ENCODE measurements at regions of chr2 and their contacts with region 1.

Region 1: DNA sequence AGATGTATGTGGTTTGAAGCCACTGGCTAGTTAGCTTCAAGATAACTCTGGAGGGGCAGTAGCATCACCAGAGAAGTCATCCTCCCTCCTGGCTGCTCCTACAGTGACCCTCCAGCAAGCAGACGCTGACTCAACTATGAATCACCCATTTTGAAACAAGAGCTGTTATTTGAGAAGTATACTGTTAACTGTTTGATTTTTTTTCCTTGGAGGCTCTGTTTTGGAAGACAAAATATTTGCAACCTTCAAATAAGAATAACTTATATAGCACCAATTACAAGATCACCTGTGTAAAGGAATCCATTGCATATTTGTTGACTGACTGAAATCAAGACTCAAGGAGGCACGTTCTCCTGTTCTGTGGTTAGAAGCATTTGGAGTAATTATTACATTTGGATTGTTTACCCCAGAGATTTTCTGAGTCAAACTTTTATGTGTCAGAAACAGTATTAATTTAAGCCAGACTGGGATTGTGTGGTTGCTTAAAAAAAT is 313.8 kb downstream of the MTX2 start:
- DNase-seq: peak; percentile 97
- ATAC-seq: peak; percentile 90
- H3K4me3 ChIP-seq: peak overlapping the region; percentile 59
- H3K27ac ChIP-seq: peak overlapping the region; percentile 93
- H3K4me1 ChIP-seq: peaks cover 40% of the 10 kb centered on the region
- H3K27me3 ChIP-seq: no peaks in the 10 kb centered on the region
- CTCF ChIP-seq: no peak

Region 2: GRCh38 chr2:176370467-176371171 is 212.4 kb before region 1 on chr2:
- CTCF ChIA-PET with region 1: no interaction called
- POLR2A ChIA-PET with region 1: no interaction called
- intact Hi-C with region 1: no loop called
- DNase-seq: no peak
- ATAC-seq: no peak
- H3K4me3 ChIP-seq: no peak overlapping the region
- H3K27ac ChIP-seq: no peak overlapping the region
- H3K4me1 ChIP-seq: no peaks in the 10 kb centered on the region
- H3K27me3 ChIP-seq: no peaks in the 10 kb centered on the region
- CTCF ChIP-seq: no peak

Region 3: DNA sequence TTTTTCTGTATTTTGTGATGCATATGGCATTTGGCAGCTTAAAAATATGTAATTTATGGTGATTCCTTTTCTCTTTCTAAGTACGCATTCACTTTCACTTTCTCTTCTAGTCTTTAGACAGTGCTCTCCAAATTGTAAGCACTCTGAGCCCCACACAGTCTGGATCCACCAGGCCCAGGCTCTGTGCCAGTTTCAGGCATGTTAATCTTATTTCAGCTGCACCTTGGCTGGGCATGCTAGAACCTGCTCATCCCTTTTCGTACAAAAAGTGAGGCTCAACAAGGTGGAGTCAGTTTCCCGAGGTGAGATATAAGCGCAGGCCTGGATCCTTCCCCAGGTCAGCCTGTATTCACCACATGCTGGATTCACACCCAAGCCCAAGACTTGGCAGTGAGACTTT is 109.9 kb before region 1 on chr2:
- CTCF ChIA-PET with region 1: no interaction called
- POLR2A ChIA-PET with region 1: no interaction called
- intact Hi-C with region 1: no loop called
- DNase-seq: no peak
- ATAC-seq: no peak
- H3K4me3 ChIP-seq: no peak overlapping the region
- H3K27ac ChIP-seq: no peak overlapping the region
- H3K4me1 ChIP-seq: peaks cover 8% of the 10 kb centered on the region; the same call in 1 of the 2 replicates
- H3K27me3 ChIP-seq: no peaks in the 10 kb centered on the region
- CTCF ChIP-seq: no peak

Region 4: DNA sequence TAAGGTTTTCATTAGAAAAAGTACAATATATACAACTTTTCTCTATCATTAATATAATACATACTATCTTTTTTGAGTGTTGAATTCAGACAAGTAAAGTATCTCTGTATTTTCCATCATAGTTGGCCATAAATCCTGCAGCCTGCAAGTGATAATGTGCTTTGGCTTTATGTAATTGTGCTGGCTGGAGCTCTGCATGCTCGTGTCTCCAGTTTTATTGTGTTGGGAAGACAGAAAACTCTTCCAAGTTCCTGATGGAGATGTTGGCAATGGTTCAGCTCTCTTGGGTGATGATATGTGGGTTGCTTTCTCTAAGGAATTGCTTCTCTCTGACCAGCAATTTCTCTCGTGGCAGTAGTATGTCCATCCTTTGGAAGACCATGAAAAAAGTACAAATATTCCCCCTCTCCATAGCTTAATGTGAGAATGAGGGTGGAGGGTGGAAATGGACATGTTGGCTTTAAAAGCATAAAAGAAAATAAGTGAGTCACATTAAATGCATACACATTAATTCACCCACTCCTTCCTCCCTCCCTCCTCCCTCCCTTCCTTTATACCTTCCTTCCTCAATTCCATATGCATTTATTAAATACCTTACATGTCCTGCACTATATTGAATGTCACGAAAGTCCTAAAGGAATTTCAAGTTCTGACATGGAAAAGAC is 30.4 kb after region 1 on chr2:
- CTCF ChIA-PET with region 1: interaction called, 3 read pairs
- POLR2A ChIA-PET with region 1: interaction called, 4 read pairs
- intact Hi-C with region 1: loop called (anchors 1 kb)
- DNase-seq: peak; percentile 69
- ATAC-seq: peak; percentile 56
- H3K4me3 ChIP-seq: peak overlapping the region; percentile 29; the same call in 1 of the 2 replicates
- H3K27ac ChIP-seq: peak overlapping the region; percentile 74
- H3K4me1 ChIP-seq: peaks cover 59% of the 10 kb centered on the region
- H3K27me3 ChIP-seq: no peaks in the 10 kb centered on the region
- CTCF ChIP-seq: no peak